Activated CD4-positive, alpha-beta T cell treated with anti-CD3 and anti-CD28 coated beads, Interleukin-2, amount 10 ng/mL, durations not matched to agents 24 days and 14 days (primary cell): ENCODE measurements at regions of chr19 and their contacts with region 1.

Region 1: DNA sequence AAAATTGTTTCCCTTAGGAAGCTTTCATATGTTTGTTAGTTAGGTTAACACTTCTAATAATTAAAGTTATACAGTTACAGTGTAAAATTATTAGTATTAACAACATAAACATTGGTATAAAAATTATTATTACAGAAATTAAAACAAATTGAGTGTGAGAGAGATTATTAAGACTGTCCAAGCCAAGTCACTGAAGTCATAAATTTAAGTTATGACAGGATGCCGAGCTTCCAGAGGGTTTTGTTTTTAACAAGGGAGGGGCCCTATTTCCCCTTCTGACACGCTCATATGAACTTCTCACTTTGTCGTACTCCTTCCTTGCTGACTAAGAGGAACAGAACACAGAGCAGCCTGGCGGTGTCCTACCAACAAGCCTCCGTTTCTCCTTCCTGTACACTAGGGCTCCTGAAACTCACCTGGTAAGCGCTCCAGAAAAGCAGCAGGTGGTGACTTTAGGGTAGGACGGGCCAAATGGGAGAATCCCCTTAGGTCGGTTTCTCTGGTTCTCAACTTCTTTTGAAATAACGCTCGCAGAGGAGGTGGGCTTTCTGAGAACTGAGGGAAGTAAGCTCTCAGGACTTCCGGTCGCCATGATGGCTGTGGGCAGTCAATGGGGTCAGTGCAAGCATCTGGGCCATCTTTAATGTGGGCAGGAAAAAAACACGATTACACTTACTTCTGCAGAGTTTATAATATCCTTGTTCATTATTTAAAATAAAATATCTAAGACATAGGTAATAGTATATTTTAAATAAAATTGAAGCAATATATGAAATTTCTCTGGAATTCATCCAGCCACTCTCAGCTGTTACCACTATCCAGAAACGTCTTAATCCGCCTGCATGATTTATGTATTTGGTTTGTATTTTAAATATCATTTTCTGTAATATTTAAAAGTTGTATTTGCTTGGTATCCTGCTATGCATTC is at the start of gene CARD8:
- DNase-seq: peak; percentile 95
- H3K4me3 Mint-ChIP-seq: peak within 1 kb of the TSS; percentile 96
- H3K27ac Mint-ChIP-seq: peak within 1 kb of the TSS; percentile 100
- H3K4me1 Mint-ChIP-seq: peaks cover 57% of the 10 kb centered on the region
- H3K27me3 Mint-ChIP-seq: no peaks in the 10 kb centered on the region
- total RNA-seq, gene CARD8: 125 and 127 TPM in 2 replicates

Region 2: GRCh38 chr19:47658431-47659348 is 597.0 kb before region 1 on chr19:
- intact Hi-C with region 1: no loop called
- DNase-seq: no peak
- H3K4me3 Mint-ChIP-seq: no peak overlapping the region
- H3K27ac Mint-ChIP-seq: no peak overlapping the region
- H3K4me1 Mint-ChIP-seq: peaks cover 2% of the 10 kb centered on the region
- H3K27me3 Mint-ChIP-seq: no peaks in the 10 kb centered on the region

Region 3: GRCh38 chr19:48110350-48110966 is 145.2 kb before region 1 on chr19 and contains the start of gene PLA2G4C:
- intact Hi-C with region 1: loop called (anchors 5 kb)
- DNase-seq: peak; percentile 94
- H3K4me3 Mint-ChIP-seq: peak within 1 kb of the TSS; percentile 89
- H3K27ac Mint-ChIP-seq: peak within 1 kb of the TSS; percentile 94
- H3K4me1 Mint-ChIP-seq: peaks cover 16% of the 10 kb centered on the region
- H3K27me3 Mint-ChIP-seq: no peaks in the 10 kb centered on the region
- total RNA-seq, gene PLA2G4C: 9.2 and 11.4 TPM in 2 replicates

Region 4: DNA sequence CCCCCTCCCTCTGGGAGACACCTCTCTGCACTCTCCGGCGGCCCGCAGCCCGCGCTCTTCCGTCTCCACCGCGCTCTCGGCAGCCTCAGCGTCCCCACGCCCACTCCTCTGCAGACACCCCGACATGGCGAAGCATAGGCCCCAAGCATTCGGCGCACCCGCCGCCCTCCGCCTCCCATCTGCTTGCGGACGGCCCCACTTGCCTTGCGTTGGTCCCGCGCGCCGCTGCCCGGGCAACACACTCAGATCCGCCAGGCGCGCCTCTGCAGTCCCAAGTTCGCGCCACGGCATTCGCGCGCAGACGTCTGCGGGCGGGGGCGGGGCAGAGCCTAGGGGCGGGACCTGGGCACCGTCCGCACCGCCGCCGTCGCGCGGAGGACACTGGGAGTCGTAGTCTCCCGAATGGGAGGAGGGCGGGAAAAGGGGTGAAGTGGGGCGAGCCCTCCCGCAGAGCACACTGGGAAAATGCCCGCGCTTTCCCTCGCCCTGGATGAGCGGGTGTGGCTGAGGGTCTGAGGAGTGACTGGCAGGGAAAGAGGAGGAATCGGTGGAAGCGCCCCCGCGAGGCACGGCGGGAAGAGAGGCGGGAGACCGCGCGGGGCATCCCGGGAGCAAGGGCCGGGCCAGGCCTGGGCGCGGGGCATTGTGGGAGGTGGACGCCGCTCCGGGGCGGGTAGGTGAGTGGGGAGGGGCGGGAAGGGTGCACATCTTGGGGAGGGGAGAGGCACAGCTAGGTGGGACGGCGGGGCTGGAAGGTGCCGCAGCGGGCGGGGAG is 85.4 kb before region 1 on chr19 and contains the starts of genes LIG1 and ZSWIM9:
- intact Hi-C with region 1: loop called (anchors 2 kb)
- DNase-seq: peak; percentile 97
- H3K4me3 Mint-ChIP-seq: peak within 1 kb of the TSS; percentile 98
- H3K27ac Mint-ChIP-seq: peak within 1 kb of the TSS; percentile 96
- H3K4me1 Mint-ChIP-seq: peaks cover 34% of the 10 kb centered on the region
- H3K27me3 Mint-ChIP-seq: no peaks in the 10 kb centered on the region
- total RNA-seq, gene LIG1: 138 and 144 TPM in 2 replicates
- total RNA-seq, gene ZSWIM9: 8.0 and 9.9 TPM in 2 replicates

Region 5: GRCh38 chr19:48203732-48204628 is 51.7 kb before region 1 on chr19:
- intact Hi-C with region 1: loop called (anchors 1 kb)
- DNase-seq: peak; percentile 98
- H3K4me3 Mint-ChIP-seq: no peak overlapping the region
- H3K27ac Mint-ChIP-seq: no peak overlapping the region
- H3K4me1 Mint-ChIP-seq: peaks cover 14% of the 10 kb centered on the region
- H3K27me3 Mint-ChIP-seq: no peaks in the 10 kb centered on the region

Region 6: GRCh38 chr19:48244281-48244680 is 11.4 kb before region 1 on chr19:
- intact Hi-C with region 1: loop called (anchors 1 kb)
- DNase-seq: peak; percentile 79
- H3K4me3 Mint-ChIP-seq: peak overlapping the region; percentile 84
- H3K27ac Mint-ChIP-seq: peak overlapping the region; percentile 84
- H3K4me1 Mint-ChIP-seq: peaks cover 42% of the 10 kb centered on the region
- H3K27me3 Mint-ChIP-seq: no peaks in the 10 kb centered on the region

Region 7: DNA sequence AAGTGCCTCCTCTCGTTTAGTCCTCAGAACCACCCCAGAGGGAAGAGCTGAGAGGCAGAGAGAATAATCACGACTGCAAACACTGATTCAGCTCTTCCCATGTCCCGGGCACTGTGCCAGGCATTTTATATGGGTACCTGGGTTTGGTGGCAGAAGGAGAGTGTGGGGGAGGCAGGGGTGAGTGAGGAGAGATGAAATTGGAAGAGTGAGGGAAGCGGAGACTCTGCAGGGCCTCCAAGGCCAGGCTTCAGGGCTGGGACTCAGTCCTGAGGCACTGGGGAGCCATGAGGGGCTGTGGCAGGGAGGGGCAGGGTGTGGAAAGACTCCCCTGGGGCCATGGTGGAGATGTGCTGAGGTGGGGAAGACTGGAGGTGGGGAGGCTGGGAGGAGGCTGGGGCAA is 117.3 kb after region 1 on chr19:
- intact Hi-C with region 1: no loop called
- DNase-seq: no peak
- H3K4me3 Mint-ChIP-seq: no peak overlapping the region
- H3K27ac Mint-ChIP-seq: no peak overlapping the region
- H3K4me1 Mint-ChIP-seq: no peaks in the 10 kb centered on the region
- H3K27me3 Mint-ChIP-seq: no peaks in the 10 kb centered on the region